ENCODE measurements at regions of chr7 and their contacts with region 1.

Region 1: DNA sequence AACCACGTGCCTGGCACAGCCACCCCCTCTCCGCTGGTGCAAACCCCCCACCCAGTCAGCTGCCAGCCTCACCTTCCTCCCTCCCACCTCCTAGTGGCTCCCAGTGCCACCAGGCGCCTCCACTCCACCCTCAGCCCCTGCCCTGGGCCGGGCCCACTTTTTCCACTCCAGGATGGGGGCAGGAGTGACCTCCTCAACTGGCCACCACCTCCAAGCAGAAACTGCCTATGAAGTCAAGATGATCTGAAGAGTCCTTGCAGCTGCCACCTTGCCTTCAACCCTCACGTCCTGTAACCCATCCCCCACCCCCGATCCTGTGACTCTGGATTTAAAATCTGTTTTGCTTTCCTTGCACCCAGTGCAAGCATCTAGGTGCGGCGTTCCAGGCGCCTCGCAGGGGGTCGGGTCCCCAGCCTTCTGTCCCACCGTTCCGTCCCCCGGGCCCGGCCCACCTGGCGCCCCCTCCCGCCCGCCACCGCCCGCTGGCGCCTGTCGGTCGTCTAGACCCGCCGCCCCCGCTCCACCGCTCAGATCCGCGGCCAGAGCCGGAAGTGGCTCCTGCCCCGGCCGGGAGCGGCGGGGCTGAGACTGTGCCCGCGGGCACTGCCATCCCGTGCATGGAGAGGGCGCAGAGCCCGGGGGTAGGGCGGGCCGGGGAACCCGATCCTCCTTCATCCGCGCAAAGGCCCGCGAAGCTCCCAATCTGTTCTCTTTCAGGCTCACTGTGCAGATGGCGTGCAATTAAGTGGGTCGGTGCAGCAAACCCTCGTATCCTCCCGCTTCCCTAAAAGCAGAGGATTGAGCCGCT is 51.2 kb upstream of the GTF2I start:
- DNase-seq: no peak
- H3K4me3 ChIP-seq: no peak overlapping the region
- H3K4me3 Mint-ChIP-seq: no peak overlapping the region
- H3K27ac Mint-ChIP-seq: no peak overlapping the region
- H3K4me1 ChIP-seq: peaks cover 15% of the 10 kb centered on the region
- H3K4me1 Mint-ChIP-seq: peaks cover 15% of the 10 kb centered on the region
- H3K27me3 ChIP-seq: no peaks in the 10 kb centered on the region
- H3K27me3 Mint-ChIP-seq: no peaks in the 10 kb centered on the region
- CTCF ChIP-seq: no peak

Region 2: GRCh38 chr7:74396993-74397392 is 209.3 kb before region 1 on chr7:
- CTCF ChIA-PET with region 1: no interaction called
- POLR2A ChIA-PET with region 1: no interaction called
- intact Hi-C with region 1: no loop called
- DNase-seq: no peak
- H3K4me3 ChIP-seq: no peak overlapping the region
- H3K4me3 Mint-ChIP-seq: no peak overlapping the region
- H3K27ac Mint-ChIP-seq: no peak overlapping the region
- H3K4me1 ChIP-seq: 0 out of 2 replicates have a peak, but pooled peaks cover 3% of the 10 kb centered on the region
- H3K4me1 Mint-ChIP-seq: peaks cover 7% of the 10 kb centered on the region
- H3K27me3 ChIP-seq: no peaks in the 10 kb centered on the region
- H3K27me3 Mint-ChIP-seq: no peaks in the 10 kb centered on the region
- CTCF ChIP-seq: no peak

Region 3: DNA sequence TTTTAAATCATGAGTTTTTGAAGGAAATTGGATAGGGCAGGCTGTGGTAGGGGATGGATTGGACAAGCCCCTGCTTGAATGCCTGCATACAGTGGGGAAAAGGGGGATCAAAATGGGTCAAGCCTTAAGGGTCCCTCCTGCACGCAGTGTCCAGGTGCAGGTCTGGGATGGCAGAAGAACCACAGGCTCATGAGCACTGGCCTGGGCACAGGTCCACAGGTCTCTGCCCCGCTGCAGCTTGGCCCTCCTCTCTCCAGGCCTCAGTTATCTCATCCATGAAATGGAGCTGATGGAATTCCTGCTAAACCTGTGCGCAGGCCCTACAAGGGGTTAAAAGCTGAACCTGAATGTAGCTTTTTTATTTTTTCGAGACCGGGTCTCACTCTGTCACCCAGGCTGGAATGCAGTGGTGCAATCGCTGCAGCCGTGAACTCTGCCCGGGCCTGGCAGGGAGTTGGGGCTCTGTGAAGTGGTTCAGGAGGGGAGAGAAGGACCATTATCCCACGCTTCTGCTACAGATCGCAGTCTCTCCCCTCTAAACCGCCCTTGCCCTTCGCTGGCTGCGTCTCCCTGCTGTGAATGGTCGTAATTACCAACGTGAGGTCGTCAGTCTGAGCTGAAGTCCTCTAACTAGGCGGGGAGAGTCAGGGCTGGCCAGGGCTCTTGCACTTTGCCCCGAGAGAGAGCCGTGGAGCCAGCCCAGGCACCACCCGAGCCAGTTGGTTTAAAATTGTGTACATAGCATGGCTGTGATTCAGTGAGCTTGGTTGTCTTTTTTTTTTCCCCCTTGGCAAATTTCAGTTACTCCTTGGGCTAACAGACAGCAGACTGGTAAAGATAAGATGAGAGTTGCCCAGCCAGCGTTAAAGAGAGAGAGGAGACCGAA is 26.3 kb before region 1 on chr7:
- CTCF ChIA-PET with region 1: interaction called, 5 read pairs
- POLR2A ChIA-PET with region 1: interaction called, 4 read pairs
- intact Hi-C with region 1: loop called (anchors 1 kb)
- DNase-seq: peak; percentile 93 to 94
- H3K4me3 ChIP-seq: peak overlapping the region; percentile 11
- H3K4me3 Mint-ChIP-seq: peak overlapping the region; percentile 76
- H3K27ac Mint-ChIP-seq: peak overlapping the region; percentile 99
- H3K4me1 ChIP-seq: peaks cover 54% of the 10 kb centered on the region
- H3K4me1 Mint-ChIP-seq: peaks cover 26% of the 10 kb centered on the region
- H3K27me3 ChIP-seq: no peaks in the 10 kb centered on the region
- H3K27me3 Mint-ChIP-seq: no peaks in the 10 kb centered on the region
- CTCF ChIP-seq: no peak